HCT116 (cell line): ENCODE measurements at regions of chr3 and their contacts with region 1.

Region 1: GRCh38 chr3:128969993-128970739 is 23.7 kb downstream of the CFAP92 start:
- DNase-seq: peak; percentile 15
- ATAC-seq: peak; percentile 74
- H3K4me3 ChIP-seq: no peak overlapping the region
- H3K27ac ChIP-seq: no peak overlapping the region
- H3K4me1 ChIP-seq: 0 out of 4 replicates have a peak, but pooled peaks cover 0 to 3% of the 10 kb centered on the region in 2 experiments
- H3K27me3 ChIP-seq: no peaks in the 10 kb centered on the region
- CTCF ChIP-seq: peak; percentile 89 to 94 (median 91)
- POLR2A ChIP-seq: no peak
- RAD21 ChIP-seq: peak; percentile 89

Region 2: GRCh38 chr3:129016356-129016719 is 46.2 kb after region 1 on chr3:
- CTCF ChIA-PET with region 1: interaction called, 27 read pairs
- POLR2A ChIA-PET with region 1: no interaction called
- RAD21 ChIA-PET with region 1: interaction called, 5 to 6 read pairs
- intact Hi-C with region 1: no loop called
- DNase-seq: no peak
- ATAC-seq: peak; percentile 89
- H3K4me3 ChIP-seq: no peak overlapping the region
- H3K27ac ChIP-seq: no peak overlapping the region
- H3K4me1 ChIP-seq: peaks cover 19 to 25% of the 10 kb centered on the region in 2 experiments
- H3K27me3 ChIP-seq: no peaks in the 10 kb centered on the region
- CTCF ChIP-seq: peak; percentile 10 to 46 (median 44); a peak in 3 of 6 replicates
- POLR2A ChIP-seq: no peak
- RAD21 ChIP-seq: no peak; the same call in 1 of the 2 replicates

Region 3: DNA sequence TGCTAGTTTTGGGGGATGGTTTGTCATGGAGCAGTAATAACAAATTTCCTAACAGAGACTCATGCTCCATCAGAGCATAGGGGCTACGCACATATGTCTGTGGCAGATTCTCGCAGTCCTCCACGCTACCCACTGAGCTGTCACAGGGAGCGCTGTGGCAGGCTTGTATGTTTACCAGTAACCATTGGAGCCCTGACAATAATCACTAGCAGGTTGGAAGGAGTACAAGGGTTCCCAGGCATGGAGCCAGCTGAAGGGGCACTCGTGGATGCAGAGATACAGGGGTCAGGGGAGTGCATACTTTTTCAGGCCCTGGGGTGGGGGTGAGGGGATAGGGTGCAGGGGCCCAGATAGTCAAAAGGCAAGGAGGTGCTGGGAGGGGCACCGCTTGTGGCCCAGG is 82.5 kb after region 1 on chr3:
- CTCF ChIA-PET with region 1: interaction called, 24 read pairs
- POLR2A ChIA-PET with region 1: no interaction called
- RAD21 ChIA-PET with region 1: no interaction called
- intact Hi-C with region 1: no loop called
- DNase-seq: no peak
- ATAC-seq: no peak
- H3K4me3 ChIP-seq: no peak overlapping the region
- H3K27ac ChIP-seq: no peak overlapping the region
- H3K4me1 ChIP-seq: peaks cover 0 to 26% of the 10 kb centered on the region in 2 experiments; a peak in 3 of 4 replicates
- H3K27me3 ChIP-seq: no peaks in the 10 kb centered on the region
- CTCF ChIP-seq: no peak
- POLR2A ChIP-seq: no peak
- RAD21 ChIP-seq: no peak

Region 4: DNA sequence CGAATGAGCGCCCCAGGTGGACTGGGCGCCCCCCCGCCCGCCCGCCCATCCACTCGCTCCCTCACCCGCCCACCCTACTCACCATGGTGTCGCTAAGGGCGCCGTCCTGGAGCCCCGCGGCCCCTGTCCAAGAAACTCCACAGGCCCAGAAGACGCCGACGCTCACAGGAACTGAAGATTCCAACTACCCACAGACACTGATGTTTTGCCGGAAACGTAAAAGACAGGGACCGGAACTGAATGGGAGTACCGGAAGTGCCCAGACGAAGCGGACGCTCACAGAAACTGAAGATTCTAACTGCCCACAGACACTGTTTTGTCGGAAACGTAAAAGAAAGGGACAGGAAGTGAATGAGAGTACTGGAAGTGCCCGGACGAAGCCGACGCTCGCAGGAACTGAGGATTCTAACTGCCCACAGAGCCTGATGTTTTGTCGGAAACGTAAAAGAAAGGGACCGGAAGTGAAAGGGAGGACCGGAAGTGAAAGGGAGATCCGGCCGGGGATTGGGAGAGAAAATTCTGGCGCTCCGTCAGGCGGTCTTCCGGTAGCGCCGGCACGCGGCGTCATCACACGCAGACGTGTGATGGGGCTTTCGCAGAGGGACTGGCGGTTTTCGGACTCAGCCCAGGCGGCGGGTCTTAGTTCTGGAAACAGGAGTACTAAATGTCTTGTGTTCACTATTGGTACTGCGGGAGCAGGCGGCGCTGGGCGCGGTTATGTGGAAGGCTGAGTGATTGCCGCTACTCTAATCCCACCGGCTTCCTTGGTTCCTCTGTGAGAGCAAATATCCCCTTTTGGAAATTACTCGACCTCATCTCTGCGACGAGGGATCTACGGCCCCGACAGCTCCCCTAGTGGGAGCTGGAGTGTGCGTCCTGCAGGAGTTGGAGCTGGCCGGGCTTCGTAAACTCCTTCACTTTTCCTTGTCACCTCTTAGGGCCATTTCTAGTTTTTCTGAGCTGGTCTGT is 191.0 kb after region 1 on chr3 and contains the start of gene ISY1:
- CTCF ChIA-PET with region 1: interaction called, 12 read pairs
- POLR2A ChIA-PET with region 1: no interaction called
- RAD21 ChIA-PET with region 1: no interaction called
- intact Hi-C with region 1: no loop called
- DNase-seq: peak; percentile 97
- ATAC-seq: peak; percentile 85
- H3K4me3 ChIP-seq: peak within 1 kb of the TSS; percentile 79 to 95
- H3K27ac ChIP-seq: peak within 1 kb of the TSS; percentile 85
- H3K4me1 ChIP-seq: peaks cover 10 to 22% of the 10 kb centered on the region in 2 experiments; a peak in 3 of 4 replicates
- H3K27me3 ChIP-seq: no peaks in the 10 kb centered on the region
- CTCF ChIP-seq: peak; percentile 83 to 89 (median 86)
- POLR2A ChIP-seq: peak; percentile 80
- RAD21 ChIP-seq: peak; percentile 53; the same call in 1 of the 2 replicates
- total RNA-seq, gene ISY1: 43.6 TPM

Region 5: GRCh38 chr3:129316131-129317013 is 346.2 kb after region 1 on chr3:
- CTCF ChIA-PET with region 1: interaction called, 10 read pairs
- POLR2A ChIA-PET with region 1: interaction called, 5 read pairs
- RAD21 ChIA-PET with region 1: no interaction called
- intact Hi-C with region 1: no loop called
- DNase-seq: peak; percentile 64
- ATAC-seq: peak; percentile 62
- H3K4me3 ChIP-seq: peak overlapping the region; percentile 85 to 93
- H3K27ac ChIP-seq: peak overlapping the region; percentile 84
- H3K4me1 ChIP-seq: peaks cover 6 to 25% of the 10 kb centered on the region in 2 experiments; a peak in 3 of 4 replicates
- H3K27me3 ChIP-seq: no peaks in the 10 kb centered on the region
- CTCF ChIP-seq: peak in 2 of 3 experiments; percentile 45 to 65; a peak in 4 of 6 replicates
- POLR2A ChIP-seq: peak; percentile 98
- RAD21 ChIP-seq: no peak

Region 6: DNA sequence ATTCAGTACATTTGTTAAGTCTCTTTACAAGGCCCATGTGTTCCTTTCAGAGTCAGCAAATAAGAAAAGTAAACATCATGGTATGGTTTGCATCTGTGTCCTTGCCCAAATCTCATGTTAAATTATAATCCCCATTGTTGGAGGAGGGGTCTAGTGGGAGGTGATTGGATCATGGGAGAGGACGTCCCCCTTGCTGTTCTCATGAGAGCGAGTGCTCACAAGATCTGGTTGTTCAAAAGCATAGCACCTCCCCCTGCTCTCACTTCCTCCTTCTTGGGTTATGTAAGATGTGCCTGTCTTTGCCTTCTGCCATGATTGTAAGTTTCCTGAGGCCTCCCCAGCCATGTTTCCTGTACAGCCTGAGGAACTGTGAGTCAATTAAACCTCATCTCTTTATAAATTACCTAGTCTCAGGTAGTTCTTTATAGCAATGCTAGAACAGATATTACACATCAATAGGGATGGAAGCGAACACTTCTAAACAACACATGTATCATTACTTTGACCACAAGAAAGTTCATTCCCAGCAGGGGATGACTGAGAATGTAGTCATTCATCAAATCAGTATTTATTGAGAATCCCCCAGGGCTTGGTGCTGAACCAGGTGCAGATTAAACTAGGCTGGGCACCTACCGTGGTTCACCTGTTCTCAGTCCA is 454.1 kb after region 1 on chr3:
- CTCF ChIA-PET with region 1: no interaction called
- POLR2A ChIA-PET with region 1: no interaction called
- RAD21 ChIA-PET with region 1: no interaction called
- intact Hi-C with region 1: no loop called
- DNase-seq: no peak
- ATAC-seq: peak; percentile 54
- H3K4me3 ChIP-seq: no peak overlapping the region
- H3K27ac ChIP-seq: no peak overlapping the region
- H3K4me1 ChIP-seq: peaks cover 0 to 17% of the 10 kb centered on the region in 2 experiments; a peak in 2 of 4 replicates
- H3K27me3 ChIP-seq: no peaks in the 10 kb centered on the region
- CTCF ChIP-seq: no peak
- POLR2A ChIP-seq: no peak
- RAD21 ChIP-seq: no peak